ENCODE measurements at regions of chr6 and their contacts with region 1.

Region 1: DNA sequence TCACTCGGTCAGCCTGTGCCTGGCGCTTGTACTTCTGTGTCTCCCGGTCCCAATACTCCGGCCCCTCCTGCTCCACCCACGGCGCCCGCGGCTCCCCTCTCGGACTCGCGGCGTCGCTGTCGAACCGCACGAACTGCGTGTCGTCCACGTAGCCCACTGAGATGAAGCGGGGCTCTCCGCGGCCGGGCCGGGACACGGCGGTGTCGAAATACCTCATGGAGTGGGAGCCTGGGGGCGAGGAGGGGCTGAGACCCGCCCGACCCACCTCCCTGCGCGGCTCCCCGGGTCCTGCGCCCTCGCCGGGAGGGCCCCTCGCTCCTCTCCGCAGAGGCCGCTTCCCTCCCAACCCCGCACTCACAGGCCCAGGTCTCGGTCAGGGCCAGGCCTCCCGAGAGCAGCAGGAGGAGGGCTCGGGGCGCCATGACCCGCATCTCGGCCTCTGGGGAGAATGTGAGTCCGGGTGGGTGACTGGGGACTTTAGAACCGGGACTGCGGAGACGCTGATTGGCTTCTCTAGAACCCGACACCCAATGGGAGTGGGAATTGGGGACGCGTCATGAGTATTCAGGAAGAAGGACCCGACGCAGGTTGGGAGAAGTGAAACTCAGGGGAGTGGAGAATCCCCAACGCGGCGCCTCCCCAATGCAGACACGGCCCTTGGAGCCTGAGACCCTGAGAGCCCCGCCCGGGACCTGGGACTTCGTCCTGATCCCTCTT is at the start of gene HLA-C:
- DNase-seq: peak; percentile 84 to 95
- ATAC-seq: peak; percentile 97 to 99 (median 98)
- H3K4me3 ChIP-seq: peak within 1 kb of the TSS; percentile 31 to 97 (median 77)
- H3K27ac ChIP-seq: peak within 1 kb of the TSS; percentile 72 to 100 (median 98)
- H3K4me1 ChIP-seq: peaks cover 0 to 25% (median 7%) of the 10 kb centered on the region in 9 donors
- H3K27me3 ChIP-seq: no peaks in the 10 kb centered on the region
- CTCF ChIP-seq: peak in 1 of 9 donors; percentile 25
- total RNA-seq, gene HLA-C: 121 to 1,262 (median 232) TPM

Region 2: DNA sequence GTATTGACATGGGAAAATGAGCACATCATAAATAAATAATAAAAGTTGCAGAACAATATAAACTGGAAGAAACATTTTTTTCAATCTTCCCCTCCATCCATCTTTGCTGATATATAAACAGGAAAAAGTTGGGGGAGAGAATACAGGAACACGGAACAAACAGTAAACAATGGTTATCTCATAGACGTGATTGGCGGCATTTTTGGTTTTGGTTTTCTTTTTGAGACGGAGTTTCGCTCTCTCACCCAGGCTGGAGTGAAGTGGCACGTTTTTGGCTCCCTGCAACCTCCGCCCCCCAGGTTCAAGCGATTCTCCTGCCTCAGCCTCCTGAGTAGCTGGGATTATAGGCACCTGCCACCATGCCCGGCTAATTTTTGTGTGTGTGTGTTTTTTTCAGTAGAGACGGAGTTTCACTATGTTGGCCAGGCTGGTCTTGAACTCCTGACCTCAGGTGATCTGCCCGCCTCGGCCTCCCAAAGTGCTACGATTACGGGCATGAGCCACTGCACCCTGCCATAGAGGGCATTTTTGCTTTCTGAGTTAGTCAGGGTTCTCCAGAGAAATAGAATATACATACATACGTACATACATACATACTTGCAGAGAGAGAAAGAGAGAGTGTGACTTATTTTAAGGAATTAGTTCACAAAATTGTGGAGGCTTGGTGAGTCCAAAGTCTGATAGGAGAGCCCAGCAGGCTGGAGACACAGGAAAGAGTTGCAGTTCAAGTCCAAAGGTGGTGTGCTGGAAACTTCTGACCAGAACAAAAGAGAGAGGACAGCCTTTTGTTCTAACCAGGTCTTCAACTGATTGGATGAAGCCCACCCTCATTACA is 738.1 kb before region 1 on chr6:
- intact Hi-C with region 1: no loop called
- DNase-seq: no peak
- ATAC-seq: peak in 2 of 8 donors; percentile 20 to 26
- H3K4me3 ChIP-seq: no peak overlapping the region
- H3K27ac ChIP-seq: peak overlapping the region in 7 of 10 donors; percentile 9 to 80 (median 71)
- H3K4me1 ChIP-seq: peaks cover 0 to 30% (median 9%) of the 10 kb centered on the region in 9 donors
- H3K27me3 ChIP-seq: no peaks in the 10 kb centered on the region
- CTCF ChIP-seq: no peak

Region 3: DNA sequence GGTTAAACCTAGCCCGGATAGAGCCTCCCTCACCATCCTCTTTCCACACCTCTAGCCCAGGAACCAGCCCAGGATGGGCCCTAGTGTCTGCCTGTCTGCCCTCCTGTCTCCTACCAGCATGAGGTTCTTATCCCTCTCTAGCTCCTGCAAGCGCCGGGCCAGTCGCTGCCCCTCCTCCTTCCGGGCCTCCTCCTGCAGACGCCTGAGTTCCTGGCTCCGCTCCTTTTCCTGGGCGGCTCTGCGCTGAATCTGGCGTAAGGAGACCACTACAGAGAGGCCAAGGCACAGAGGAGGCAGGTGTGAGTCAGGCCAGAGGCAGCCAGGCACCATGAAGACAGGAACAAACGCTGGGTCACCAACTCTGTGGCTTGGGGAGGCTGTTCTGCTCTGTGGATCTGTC is 128.7 kb before region 1 on chr6:
- intact Hi-C with region 1: loop called in 2 of 10 experiments (anchors 10 kb)
- DNase-seq: peak; percentile 68 to 72
- ATAC-seq: peak; percentile 55 to 92 (median 87)
- H3K4me3 ChIP-seq: peak overlapping the region in 1 of 10 donors; percentile 2
- H3K27ac ChIP-seq: peak overlapping the region in 7 of 10 donors; percentile 15 to 76 (median 65)
- H3K4me1 ChIP-seq: peaks cover 9 to 40% (median 25%) of the 10 kb centered on the region in 9 donors
- H3K27me3 ChIP-seq: no peaks in the 10 kb centered on the region
- CTCF ChIP-seq: no peak

Region 4: GRCh38 chr6:31203345-31203979 is 68.3 kb before region 1 on chr6:
- intact Hi-C with region 1: loop called in 7 of 10 experiments (anchors 2 to 5 kb)
- DNase-seq: no peak
- ATAC-seq: peak in 6 of 8 donors; percentile 19 to 61 (median 26)
- H3K4me3 ChIP-seq: peak overlapping the region in 9 of 10 donors; percentile 3 to 56 (median 50)
- H3K27ac ChIP-seq: peak overlapping the region; percentile 55 to 95 (median 80)
- H3K4me1 ChIP-seq: peaks cover 0 to 59% (median 25%) of the 10 kb centered on the region in 9 donors
- H3K27me3 ChIP-seq: no peaks in the 10 kb centered on the region
- CTCF ChIP-seq: no peak

Region 5: DNA sequence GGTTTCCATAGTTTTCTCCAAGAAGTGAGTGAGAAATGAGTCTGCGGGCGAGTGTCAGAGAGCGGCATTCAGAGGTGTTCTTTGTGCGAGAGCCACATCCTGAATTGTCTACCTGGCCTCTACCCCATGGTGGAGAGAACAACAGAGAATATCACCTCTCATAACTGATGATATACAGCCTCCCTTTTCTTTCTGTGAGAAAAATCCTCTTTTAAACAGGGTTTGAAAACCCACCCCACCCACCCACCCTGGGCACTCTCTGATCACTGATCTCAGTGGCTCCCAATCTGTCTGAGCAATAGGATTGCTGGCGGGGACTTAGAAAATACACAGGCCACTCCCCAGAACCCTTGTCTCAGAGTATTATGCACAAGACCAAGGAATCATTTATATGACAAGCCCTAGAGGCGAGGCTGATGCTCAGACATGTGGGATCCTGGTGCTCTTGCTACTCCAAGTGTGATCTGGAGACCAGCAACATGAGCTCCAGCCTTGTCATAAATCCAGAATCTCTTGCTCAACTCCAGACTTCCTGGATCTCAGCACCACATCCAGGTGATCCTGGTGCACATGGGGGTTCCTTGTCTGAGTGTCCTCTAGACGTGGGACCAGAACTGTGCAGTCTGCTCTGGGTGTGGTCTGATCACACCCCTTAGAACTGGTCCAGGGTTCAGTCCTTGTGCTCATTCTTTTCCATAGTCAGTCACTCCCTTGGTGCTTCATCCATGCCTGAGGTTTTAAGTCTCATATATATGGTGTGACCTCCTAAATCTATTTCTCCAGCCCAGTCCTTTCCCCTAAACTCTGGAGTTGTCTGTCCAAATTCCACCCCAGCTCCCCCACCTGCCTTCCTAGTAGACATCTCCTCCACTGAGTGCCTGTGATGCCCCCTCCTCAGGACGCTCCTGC is 79.9 kb after region 1 on chr6:
- intact Hi-C with region 1: loop called in 9 of 10 experiments (anchors 2 to 5 kb)
- DNase-seq: no peak
- ATAC-seq: no peak
- H3K4me3 ChIP-seq: no peak overlapping the region
- H3K27ac ChIP-seq: no peak overlapping the region
- H3K4me1 ChIP-seq: peaks cover 0 to 33% (median 16%) of the 10 kb centered on the region in 9 donors
- H3K27me3 ChIP-seq: no peaks in the 10 kb centered on the region
- CTCF ChIP-seq: no peak

Region 6: GRCh38 chr6:31366693-31367470 is 95.1 kb after region 1 on chr6:
- intact Hi-C with region 1: loop called in 2 of 10 experiments (anchors 5 kb)
- DNase-seq: peak; percentile 82 to 90
- ATAC-seq: peak; percentile 98 to 100 (median 100)
- H3K4me3 ChIP-seq: peak overlapping the region in 8 of 10 donors; percentile 12 to 51 (median 42)
- H3K27ac ChIP-seq: no peak overlapping the region
- H3K4me1 ChIP-seq: peaks cover 0 to 9% (median 0%) of the 10 kb centered on the region in 9 donors
- H3K27me3 ChIP-seq: peaks cover 0 to 34% (median 14%) of the 10 kb centered on the region in 7 donors
- CTCF ChIP-seq: peak; percentile 88 to 97 (median 94)

Measured in heart right ventricle (tissue), 16 donors.